A549 (cell line): ENCODE measurements at regions of chr5 and their contacts with region 1.

Region 1: GRCh38 chr5:159156426-159157238 is 52.7 kb downstream of the RNF145 start:
- DNase-seq: peak; percentile 73 to 81
- ATAC-seq: peak; percentile 79 to 83
- H3K4me3 ChIP-seq: no peak overlapping the region
- H3K27ac ChIP-seq: peak overlapping the region; percentile 56 to 60; a peak in 4 of 6 replicates
- H3K4me1 ChIP-seq: peaks cover 41% of the 10 kb centered on the region
- CTCF ChIP-seq: peak; percentile 97
- EP300 ChIP-seq: no peak
- POLR2A ChIP-seq: no peak
- RAD21 ChIP-seq: peak; percentile 92 to 93

Region 2: DNA sequence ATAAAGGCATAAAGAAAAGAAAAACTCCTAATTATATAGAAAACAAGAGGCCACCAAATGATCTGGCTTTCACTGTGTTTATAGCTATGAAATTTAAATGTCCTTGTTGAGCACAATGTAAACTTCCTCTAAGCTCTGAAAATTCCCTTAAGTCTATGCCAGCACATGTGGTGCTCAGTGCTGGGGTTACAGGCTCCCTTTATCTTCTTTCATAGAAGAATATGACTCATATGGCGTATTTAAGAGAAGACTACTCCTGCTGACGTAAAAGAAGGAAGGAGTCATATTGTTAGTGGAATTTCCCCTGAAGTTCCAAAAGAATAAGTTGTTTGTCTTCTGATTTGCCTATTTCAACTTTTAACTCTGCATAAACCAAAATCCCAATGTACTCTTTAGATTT is 22.3 kb after region 1 on chr5:
- CTCF ChIA-PET with region 1: interaction called, 10 read pairs
- POLR2A ChIA-PET with region 1: no interaction called
- DNase-seq: peak; percentile 57 to 97
- ATAC-seq: peak; percentile 92 to 96
- H3K4me3 ChIP-seq: peak overlapping the region; percentile 16; the same call in 1 of the 3 replicates
- H3K27ac ChIP-seq: peak overlapping the region in 1 of 2 experiments; percentile 94; a peak in 4 of 6 replicates
- H3K4me1 ChIP-seq: peaks cover 95% of the 10 kb centered on the region
- CTCF ChIP-seq: no peak
- EP300 ChIP-seq: peak; percentile 94 to 96
- POLR2A ChIP-seq: no peak
- RAD21 ChIP-seq: peak in 1 of 2 experiments; percentile 41; a peak in 1 of 5 replicates

Region 3: GRCh38 chr5:159198063-159199036 is 41.7 kb after region 1 on chr5:
- CTCF ChIA-PET with region 1: interaction called, 25 read pairs
- POLR2A ChIA-PET with region 1: no interaction called
- DNase-seq: no peak
- ATAC-seq: peak in 1 of 2 experiments; percentile 47; a peak in 3 of 6 replicates
- H3K4me3 ChIP-seq: no peak overlapping the region
- H3K27ac ChIP-seq: peak overlapping the region in 1 of 2 experiments; percentile 30; a peak in 2 of 6 replicates
- H3K4me1 ChIP-seq: peaks cover 96% of the 10 kb centered on the region
- CTCF ChIP-seq: no peak
- EP300 ChIP-seq: no peak
- POLR2A ChIP-seq: no peak
- RAD21 ChIP-seq: no peak

Region 4: DNA sequence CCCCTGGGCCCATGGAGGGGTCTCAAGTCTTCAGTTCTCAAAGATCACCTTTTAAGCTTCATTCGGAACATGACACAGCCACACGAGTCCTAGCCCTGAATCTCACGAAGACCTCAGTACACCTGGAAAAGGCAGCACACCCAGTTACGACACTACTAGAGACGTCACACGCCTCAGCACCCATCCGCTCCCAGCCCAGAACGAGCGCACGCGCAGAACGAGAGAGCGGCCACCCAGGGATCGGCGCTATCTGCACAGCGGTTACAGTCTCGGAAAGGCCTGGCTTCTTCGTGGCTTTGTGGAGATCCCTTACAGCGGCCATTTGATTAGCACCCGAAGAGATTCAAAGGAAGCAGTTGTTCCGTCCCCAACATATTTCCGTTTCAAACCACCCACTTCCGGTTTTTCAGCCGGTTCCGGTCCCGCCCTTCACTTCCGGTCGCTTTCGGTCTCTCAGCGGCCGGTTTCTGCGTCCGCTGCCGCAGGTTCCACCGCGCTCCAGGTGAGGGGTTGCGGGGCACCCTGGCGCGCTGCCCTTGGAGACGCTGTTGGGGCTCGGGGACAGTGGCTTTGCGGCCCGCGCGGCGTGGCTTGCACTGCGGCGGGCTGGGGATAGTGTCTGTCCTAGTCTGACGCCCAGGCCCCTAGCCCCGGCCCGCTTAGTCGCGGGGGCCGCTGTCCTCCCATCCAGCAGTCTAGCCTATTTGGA is 106.4 kb after region 1 on chr5 and contains the start of gene UBLCP1:
- CTCF ChIA-PET with region 1: interaction called, 16 read pairs
- POLR2A ChIA-PET with region 1: no interaction called
- DNase-seq: peak; percentile 84 to 87
- ATAC-seq: peak; percentile 93 to 96
- H3K4me3 ChIP-seq: peak within 1 kb of the TSS; percentile 67
- H3K27ac ChIP-seq: peak within 1 kb of the TSS; percentile 93 to 96
- H3K4me1 ChIP-seq: peaks cover 10% of the 10 kb centered on the region; the same call in 1 of the 3 replicates
- CTCF ChIP-seq: no peak
- EP300 ChIP-seq: no peak
- POLR2A ChIP-seq: peak; percentile 61
- RAD21 ChIP-seq: no peak; a peak in 1 of 5 replicates
- polyA plus RNA-seq, gene UBLCP1: 46.7 and 64.8 TPM in 2 replicates

Region 5: DNA sequence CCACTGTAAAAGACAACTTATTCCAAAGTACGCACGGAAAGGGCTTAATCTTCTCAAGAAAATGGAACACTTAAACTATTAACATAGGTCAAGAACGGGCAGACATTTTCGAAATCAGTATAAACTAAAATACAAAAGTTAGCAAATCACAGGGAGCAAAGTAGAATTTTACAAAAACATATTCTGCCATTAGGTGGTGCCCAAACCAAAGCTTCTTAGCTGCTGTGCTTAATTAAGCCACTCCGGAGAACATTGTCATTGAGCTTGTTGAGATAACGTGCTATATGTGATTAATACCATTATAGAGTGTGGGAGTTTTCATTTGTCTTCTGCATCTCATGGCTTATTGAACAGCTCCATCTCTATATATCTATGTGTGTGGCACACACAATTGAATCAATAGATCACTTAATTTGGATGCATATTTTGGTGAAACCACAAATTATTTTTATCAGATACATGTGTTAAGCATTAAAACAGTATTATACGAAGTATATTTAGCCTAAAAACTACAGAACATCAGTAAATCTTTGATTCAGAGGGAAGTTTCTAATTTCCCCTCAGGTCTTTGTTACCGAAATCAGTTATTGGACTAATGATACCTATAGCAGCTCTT is 129.9 kb after region 1 on chr5:
- CTCF ChIA-PET with region 1: interaction called, 12 read pairs
- POLR2A ChIA-PET with region 1: no interaction called
- DNase-seq: peak in 1 of 2 experiments; percentile 35
- ATAC-seq: peak in 1 of 2 experiments; percentile 57; a peak in 2 of 6 replicates
- H3K4me3 ChIP-seq: no peak overlapping the region
- H3K27ac ChIP-seq: no peak overlapping the region
- H3K4me1 ChIP-seq: no peaks in the 10 kb centered on the region
- CTCF ChIP-seq: peak; percentile 61
- EP300 ChIP-seq: no peak
- POLR2A ChIP-seq: no peak
- RAD21 ChIP-seq: peak; percentile 71 to 72

Region 6: GRCh38 chr5:159316519-159317383 is 160.1 kb after region 1 on chr5:
- CTCF ChIA-PET with region 1: interaction called, 100 read pairs
- POLR2A ChIA-PET with region 1: no interaction called
- DNase-seq: peak; percentile 60 to 79
- ATAC-seq: peak; percentile 93 to 98
- H3K4me3 ChIP-seq: no peak overlapping the region
- H3K27ac ChIP-seq: no peak overlapping the region
- H3K4me1 ChIP-seq: no peaks in the 10 kb centered on the region
- CTCF ChIP-seq: peak; percentile 77
- EP300 ChIP-seq: no peak
- POLR2A ChIP-seq: no peak
- RAD21 ChIP-seq: peak; percentile 85 to 88